Right cardiac atrium (tissue), 5 donors: ENCODE measurements at regions of chr4 and their contacts with region 1.

Region 1: DNA sequence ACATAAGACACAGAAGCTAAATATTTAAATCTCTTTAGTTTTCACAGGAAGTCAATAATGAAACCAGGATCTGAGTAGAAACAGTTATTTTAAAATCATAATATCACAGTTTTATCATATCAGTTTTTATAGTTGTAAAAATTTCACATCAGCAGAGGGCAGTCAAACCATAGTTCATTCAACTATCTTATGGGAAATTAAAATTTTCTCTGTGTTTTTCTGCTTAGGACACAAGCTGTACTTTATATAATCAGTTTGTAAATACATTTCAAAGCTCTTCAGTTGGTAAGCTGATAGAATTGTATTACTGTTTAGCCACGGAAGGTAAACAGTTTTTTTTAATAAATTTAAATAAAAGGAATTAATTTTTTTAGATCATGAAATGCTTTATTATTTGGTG is 204.8 kb upstream of the NUDT6 start:
- DNase-seq: no peak
- ATAC-seq: no peak
- H3K4me3 ChIP-seq: no peak overlapping the region
- H3K27ac ChIP-seq: no peak overlapping the region
- H3K4me1 ChIP-seq: no peaks in the 10 kb centered on the region
- H3K27me3 ChIP-seq: no peaks in the 10 kb centered on the region

Region 2: GRCh38 chr4:123380728-123381716 is 253.8 kb after region 1 on chr4:
- intact Hi-C with region 1: loop called in 1 of 4 experiments (anchors 10 kb)
- DNase-seq: no peak
- ATAC-seq: no peak
- H3K4me3 ChIP-seq: no peak overlapping the region
- H3K27ac ChIP-seq: no peak overlapping the region
- H3K4me1 ChIP-seq: no peaks in the 10 kb centered on the region
- H3K27me3 ChIP-seq: no peaks in the 10 kb centered on the region